Naive thymus-derived CD4-positive, alpha-beta T cell (primary cell): ENCODE measurements at regions of chr3 and their contacts with region 1.

Region 1: GRCh38 chr3:105629718-105630117 is 239.1 kb downstream of the CBLB start:
- DNase-seq: no peak
- ATAC-seq: no peak
- H3K4me3 ChIP-seq: no peak overlapping the region
- H3K4me3 Mint-ChIP-seq: no peak overlapping the region
- H3K27ac ChIP-seq: no peak overlapping the region
- H3K27ac Mint-ChIP-seq: no peak overlapping the region
- H3K4me1 ChIP-seq: no peaks in the 10 kb centered on the region
- H3K4me1 Mint-ChIP-seq: no peaks in the 10 kb centered on the region
- H3K27me3 ChIP-seq: no peaks in the 10 kb centered on the region
- H3K27me3 Mint-ChIP-seq: no peaks in the 10 kb centered on the region

Region 2: DNA sequence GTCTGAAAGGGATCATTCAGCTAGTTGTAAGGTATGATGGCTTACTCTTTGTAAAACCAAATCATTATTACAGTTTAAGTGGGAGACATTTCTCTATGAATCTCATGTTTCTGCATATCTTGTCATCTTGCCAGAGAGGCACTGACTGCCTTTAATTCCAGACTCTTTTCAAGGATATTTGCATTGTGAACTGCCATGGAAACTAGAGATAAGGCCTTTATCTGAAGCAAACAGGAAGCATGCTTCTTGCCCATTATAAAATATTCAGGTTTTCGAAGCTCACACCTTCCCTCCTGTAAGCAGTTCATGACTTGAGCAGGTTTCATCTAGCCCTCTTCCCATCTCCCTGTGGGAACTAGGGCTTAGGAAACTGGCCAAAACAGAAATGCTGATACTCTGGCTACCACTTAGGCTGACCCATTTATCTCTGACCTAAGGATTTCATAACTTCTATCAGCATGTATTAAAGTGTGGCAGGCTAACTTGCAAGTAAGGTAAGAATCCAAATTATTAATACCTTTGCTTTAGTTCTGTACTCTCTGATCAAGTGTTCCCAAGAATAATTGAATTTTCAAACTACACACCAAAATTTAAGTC is 589.6 kb before region 1 on chr3:
- CTCF ChIA-PET with region 1: no interaction called
- POLR2A ChIA-PET with region 1: no interaction called
- intact Hi-C with region 1: loop called in 1 of 2 experiments (anchors 10 kb)
- DNase-seq: no peak
- ATAC-seq: no peak
- H3K4me3 ChIP-seq: no peak overlapping the region
- H3K4me3 Mint-ChIP-seq: no peak overlapping the region
- H3K27ac ChIP-seq: no peak overlapping the region
- H3K27ac Mint-ChIP-seq: no peak overlapping the region
- H3K4me1 ChIP-seq: no peaks in the 10 kb centered on the region
- H3K4me1 Mint-ChIP-seq: no peaks in the 10 kb centered on the region
- H3K27me3 ChIP-seq: no peaks in the 10 kb centered on the region
- H3K27me3 Mint-ChIP-seq: no peaks in the 10 kb centered on the region

Region 3: GRCh38 chr3:105722943-105723556 is 93.3 kb after region 1 on chr3:
- CTCF ChIA-PET with region 1: no interaction called
- POLR2A ChIA-PET with region 1: no interaction called
- intact Hi-C with region 1: no loop called
- DNase-seq: peak in 1 of 9 donors; percentile 10
- ATAC-seq: peak; percentile 84
- H3K4me3 ChIP-seq: no peak overlapping the region
- H3K4me3 Mint-ChIP-seq: peak overlapping the region in 2 of 10 donors; percentile 47 to 56
- H3K27ac ChIP-seq: no peak overlapping the region
- H3K27ac Mint-ChIP-seq: peak overlapping the region in 4 of 9 donors; percentile 35 to 75 (median 49)
- H3K4me1 ChIP-seq: peaks cover 6% of the 10 kb centered on the region in 2 donors
- H3K4me1 Mint-ChIP-seq: peaks cover 8 to 43% (median 28%) of the 10 kb centered on the region in 7 donors
- H3K27me3 ChIP-seq: no peaks in the 10 kb centered on the region
- H3K27me3 Mint-ChIP-seq: no peaks in the 10 kb centered on the region